ENCODE measurements at regions of chr1 and their contacts with region 1.

Region 1: GRCh38 chr1:150909585-150910180 is 16.5 kb upstream of the SETDB1 start:
- DNase-seq: no peak
- H3K4me3 ChIP-seq: no peak overlapping the region
- H3K27ac ChIP-seq: no peak overlapping the region
- H3K4me1 ChIP-seq: peaks cover 0 to 4% (median 0%) of the 10 kb centered on the region in 4 experiments; a peak in 2 of 7 replicates
- H3K27me3 ChIP-seq: no peaks in the 10 kb centered on the region; a peak in 1 of 7 replicates
- CTCF ChIP-seq: no peak
- EP300 ChIP-seq: no peak
- POLR2A ChIP-seq: no peak
- RAD21 ChIP-seq: no peak

Region 2: GRCh38 chr1:150922519-150922975 is 12.9 kb after region 1 on chr1:
- CTCF ChIA-PET with region 1: interaction called, 11 read pairs
- POLR2A ChIA-PET with region 1: no interaction called
- DNase-seq: peak; percentile 15 to 70
- H3K4me3 ChIP-seq: no peak overlapping the region
- H3K27ac ChIP-seq: no peak overlapping the region
- H3K4me1 ChIP-seq: peaks cover 0 to 4% (median 0%) of the 10 kb centered on the region in 4 experiments; a peak in 2 of 7 replicates
- H3K27me3 ChIP-seq: no peaks in the 10 kb centered on the region
- CTCF ChIP-seq: peak; percentile 25 to 80 (median 56)
- EP300 ChIP-seq: no peak
- POLR2A ChIP-seq: no peak
- RAD21 ChIP-seq: peak; percentile 66 to 72

Region 3: GRCh38 chr1:150974580-150975478 is 65.1 kb after region 1 on chr1 and contains the start of gene CERS2:
- CTCF ChIA-PET with region 1: no interaction called
- POLR2A ChIA-PET with region 1: no interaction called
- DNase-seq: peak in 1 of 2 experiments; percentile 77
- H3K4me3 ChIP-seq: peak within 1 kb of the TSS; percentile 74 to 91 (median 80)
- H3K27ac ChIP-seq: peak within 1 kb of the TSS; percentile 64; the same call in 1 of the 2 replicates
- H3K4me1 ChIP-seq: peaks cover 20 to 48% (median 38%) of the 10 kb centered on the region in 4 experiments
- H3K27me3 ChIP-seq: no peaks in the 10 kb centered on the region
- CTCF ChIP-seq: no peak
- EP300 ChIP-seq: no peak
- POLR2A ChIP-seq: no peak
- RAD21 ChIP-seq: no peak
- total RNA-seq, gene CERS2: 237 and 241 TPM in 2 replicates

Measured in H1 (cell line).